ENCODE measurements at regions of chr10 and their contacts with region 1.

Region 1: DNA sequence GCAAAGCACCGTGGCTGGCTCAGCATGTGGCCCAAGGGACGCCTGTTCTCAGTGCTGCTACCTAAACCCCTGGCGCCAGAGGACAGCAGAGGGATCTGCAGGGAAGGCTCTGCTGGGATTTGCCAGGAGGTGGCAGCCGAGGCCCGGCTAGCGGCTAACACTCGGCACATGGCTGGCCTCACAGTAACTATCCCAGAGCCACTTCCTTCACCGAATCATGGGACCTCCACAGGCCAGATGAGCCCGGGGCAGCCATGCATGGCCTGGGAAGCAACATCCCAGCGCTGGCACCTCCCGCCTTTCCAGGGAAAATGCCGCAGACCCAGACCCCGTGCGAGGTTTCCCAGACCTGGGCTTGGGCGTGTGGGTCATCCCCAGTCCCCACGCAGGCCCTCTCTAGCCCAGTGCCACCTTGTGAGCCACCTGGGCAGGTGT is 36.4 kb downstream of the DPYSL4 start:
- DNase-seq: peak; percentile 82 to 90
- H3K4me3 ChIP-seq: no peak overlapping the region
- H3K4me1 ChIP-seq: no peaks in the 10 kb centered on the region
- H3K27me3 ChIP-seq: no peaks in the 10 kb centered on the region

Region 2: DNA sequence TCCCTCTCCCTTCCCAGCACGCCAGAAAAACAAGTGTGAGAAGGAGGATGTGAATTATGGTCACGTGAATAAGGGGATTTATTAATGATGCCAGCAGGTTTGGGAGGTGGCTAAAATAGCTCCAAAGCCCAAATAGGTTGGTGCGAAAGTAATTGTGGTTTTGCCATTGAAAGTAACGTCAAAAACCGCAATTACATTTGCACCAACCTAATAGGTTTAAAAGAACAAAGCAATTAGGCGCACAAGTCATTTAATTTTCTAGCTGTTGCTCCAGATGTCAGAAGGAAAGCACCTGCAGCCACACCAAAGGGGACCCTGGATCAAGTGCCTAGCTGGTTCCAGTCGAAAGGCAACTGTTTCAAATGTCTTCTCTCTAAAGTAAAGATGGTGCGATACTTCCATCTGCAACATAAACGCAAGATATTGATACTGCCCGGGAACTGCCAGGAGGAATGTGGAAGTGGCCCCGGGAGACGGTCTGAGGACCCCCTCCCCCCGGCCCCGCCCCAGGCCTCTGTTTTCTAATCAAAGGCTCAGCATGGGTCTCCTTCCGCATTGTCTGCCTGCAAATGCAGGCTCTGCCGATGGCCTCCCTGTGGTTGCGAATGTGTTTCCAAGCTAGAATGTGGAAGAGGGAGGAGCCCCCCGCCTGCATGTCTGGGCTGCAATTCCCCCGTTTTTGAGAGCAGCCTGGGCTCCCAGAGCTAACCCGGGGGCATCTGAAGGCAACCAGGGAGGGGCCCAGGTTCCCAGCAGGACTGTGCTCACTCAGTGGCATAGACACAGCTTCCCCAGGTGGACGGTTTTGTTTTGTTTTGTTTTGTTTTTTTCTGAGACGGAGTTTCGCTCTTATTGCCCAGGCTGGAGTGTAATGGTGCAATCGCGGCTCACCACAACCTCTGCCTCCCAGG is 546.4 kb before region 1 on chr10:
- in situ Hi-C with region 1: no loop called
- DNase-seq: no peak
- H3K4me3 ChIP-seq: no peak overlapping the region
- H3K4me1 ChIP-seq: no peaks in the 10 kb centered on the region
- H3K27me3 ChIP-seq: no peaks in the 10 kb centered on the region

Region 3: GRCh38 chr10:132354356-132355094 is 131.4 kb after region 1 on chr10:
- in situ Hi-C with region 1: loop called (anchors 5 kb)
- DNase-seq: no peak
- H3K4me3 ChIP-seq: no peak overlapping the region
- H3K4me1 ChIP-seq: no peaks in the 10 kb centered on the region
- H3K27me3 ChIP-seq: no peaks in the 10 kb centered on the region

Region 4: DNA sequence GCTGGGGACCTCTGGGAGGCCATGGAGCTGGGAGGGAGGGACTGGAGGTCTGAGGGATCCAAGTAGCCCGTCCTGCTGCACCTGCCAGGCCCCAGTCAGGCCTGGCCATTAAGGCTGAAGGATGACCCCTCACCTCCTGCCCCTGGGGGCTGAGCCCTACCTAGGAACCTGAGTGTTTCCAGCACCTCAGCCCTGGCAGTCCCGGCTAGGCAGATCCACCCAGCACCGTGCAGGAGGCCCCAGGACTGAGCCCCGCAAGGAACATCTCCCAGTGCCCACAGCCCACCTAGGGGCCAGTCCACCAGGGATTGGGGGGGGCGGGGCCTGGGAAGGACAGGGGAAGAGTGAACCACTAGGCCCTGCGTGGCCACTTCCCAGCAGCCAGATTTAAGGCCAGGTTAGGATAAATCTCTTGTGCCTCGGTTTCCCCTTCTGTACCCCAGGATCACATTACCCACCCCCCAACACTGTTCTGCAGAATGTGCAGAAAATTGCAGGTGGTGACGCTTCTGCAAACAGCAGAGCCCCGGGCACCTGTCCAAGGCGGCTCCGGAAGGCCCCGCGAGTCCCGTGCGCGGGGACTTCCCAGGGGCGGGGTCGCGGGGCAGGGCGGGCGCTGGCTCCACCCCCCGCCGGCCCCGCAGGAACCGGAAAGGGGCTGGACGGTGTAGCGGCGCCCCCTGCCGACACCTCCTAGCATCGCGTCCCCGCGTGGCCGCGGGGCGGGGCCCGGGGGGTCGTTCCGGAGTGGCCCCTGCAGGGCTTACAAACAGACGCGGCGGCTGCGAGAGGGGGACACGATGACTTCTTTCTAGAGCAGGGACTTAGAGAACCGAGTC is 229.7 kb after region 1 on chr10:
- in situ Hi-C with region 1: loop called (anchors 10 kb)
- DNase-seq: peak; percentile 61 to 89
- H3K4me3 ChIP-seq: peak overlapping the region; percentile 13
- H3K4me1 ChIP-seq: peaks cover 15% of the 10 kb centered on the region
- H3K27me3 ChIP-seq: no peaks in the 10 kb centered on the region

Region 5: GRCh38 chr10:132637477-132638129 is 414.4 kb after region 1 on chr10:
- in situ Hi-C with region 1: loop called (anchors 25 kb)
- DNase-seq: peak; percentile 47 to 72
- H3K4me3 ChIP-seq: no peak overlapping the region
- H3K4me1 ChIP-seq: no peaks in the 10 kb centered on the region
- H3K27me3 ChIP-seq: no peaks in the 10 kb centered on the region